Dendritic cell treated with granulocyte-macrophage colony-stimulating factor and Interleukin-4, amounts not matched to agents 40 ng/mL and 50 ng/mL, for 4 days (primary cell): ENCODE measurements at regions of chr9 and their contacts with region 1.

Region 1: GRCh38 chr9:111412280-111412679 is 71.9 kb downstream of the ECPAS start:
- H3K4me3 Mint-ChIP-seq: no peak overlapping the region
- H3K27ac Mint-ChIP-seq: no peak overlapping the region
- H3K4me1 Mint-ChIP-seq: no peaks in the 10 kb centered on the region
- H3K27me3 Mint-ChIP-seq: no peaks in the 10 kb centered on the region

Region 2: GRCh38 chr9:111369873-111370272 is 42.4 kb before region 1 on chr9:
- intact Hi-C with region 1: loop called (anchors 5 kb)
- H3K4me3 Mint-ChIP-seq: no peak overlapping the region
- H3K27ac Mint-ChIP-seq: no peak overlapping the region
- H3K4me1 Mint-ChIP-seq: no peaks in the 10 kb centered on the region
- H3K27me3 Mint-ChIP-seq: no peaks in the 10 kb centered on the region

Region 3: GRCh38 chr9:111482694-111483438 is 70.6 kb after region 1 on chr9:
- intact Hi-C with region 1: no loop called
- H3K4me3 Mint-ChIP-seq: peak overlapping the region; percentile 88
- H3K27ac Mint-ChIP-seq: peak overlapping the region; percentile 93
- H3K4me1 Mint-ChIP-seq: peaks cover 31% of the 10 kb centered on the region
- H3K27me3 Mint-ChIP-seq: peaks cover 5% of the 10 kb centered on the region